Lower leg skin (tissue), 4 donors: ENCODE measurements at regions of chr5 and their contacts with region 1.

Region 1: DNA sequence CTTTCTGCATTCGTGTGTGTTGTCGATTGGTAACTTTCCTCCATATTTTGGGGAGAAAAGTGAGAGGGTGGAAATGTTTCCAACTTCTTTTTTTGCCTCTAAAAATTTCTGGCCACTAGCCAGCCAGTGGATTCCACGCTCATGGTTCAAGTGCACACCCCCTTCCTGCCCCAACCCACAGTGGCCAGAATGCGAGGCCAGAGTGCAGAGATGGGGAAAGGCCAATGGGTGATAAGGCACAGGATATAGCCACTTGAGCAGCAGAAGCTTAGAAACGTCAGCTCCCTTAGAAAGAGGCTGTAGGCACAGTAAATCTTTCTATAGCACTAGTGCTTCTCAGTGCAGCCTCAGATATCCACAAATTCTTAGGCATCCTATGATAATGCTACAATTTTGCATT is 75.8 kb upstream of the ADRB2 start:
- DNase-seq: no peak
- H3K4me3 ChIP-seq: no peak overlapping the region
- CTCF ChIP-seq: no peak
- POLR2A ChIP-seq: no peak

Region 2: GRCh38 chr5:148897842-148898241 is 147.2 kb after region 1 on chr5:
- intact Hi-C with region 1: loop called (anchors 10 kb)
- DNase-seq: no peak
- H3K4me3 ChIP-seq: no peak overlapping the region
- CTCF ChIP-seq: no peak
- POLR2A ChIP-seq: no peak